Mammary epithelial cell (primary cell): ENCODE measurements at regions of chr15 and their contacts with region 1.

Region 1: DNA sequence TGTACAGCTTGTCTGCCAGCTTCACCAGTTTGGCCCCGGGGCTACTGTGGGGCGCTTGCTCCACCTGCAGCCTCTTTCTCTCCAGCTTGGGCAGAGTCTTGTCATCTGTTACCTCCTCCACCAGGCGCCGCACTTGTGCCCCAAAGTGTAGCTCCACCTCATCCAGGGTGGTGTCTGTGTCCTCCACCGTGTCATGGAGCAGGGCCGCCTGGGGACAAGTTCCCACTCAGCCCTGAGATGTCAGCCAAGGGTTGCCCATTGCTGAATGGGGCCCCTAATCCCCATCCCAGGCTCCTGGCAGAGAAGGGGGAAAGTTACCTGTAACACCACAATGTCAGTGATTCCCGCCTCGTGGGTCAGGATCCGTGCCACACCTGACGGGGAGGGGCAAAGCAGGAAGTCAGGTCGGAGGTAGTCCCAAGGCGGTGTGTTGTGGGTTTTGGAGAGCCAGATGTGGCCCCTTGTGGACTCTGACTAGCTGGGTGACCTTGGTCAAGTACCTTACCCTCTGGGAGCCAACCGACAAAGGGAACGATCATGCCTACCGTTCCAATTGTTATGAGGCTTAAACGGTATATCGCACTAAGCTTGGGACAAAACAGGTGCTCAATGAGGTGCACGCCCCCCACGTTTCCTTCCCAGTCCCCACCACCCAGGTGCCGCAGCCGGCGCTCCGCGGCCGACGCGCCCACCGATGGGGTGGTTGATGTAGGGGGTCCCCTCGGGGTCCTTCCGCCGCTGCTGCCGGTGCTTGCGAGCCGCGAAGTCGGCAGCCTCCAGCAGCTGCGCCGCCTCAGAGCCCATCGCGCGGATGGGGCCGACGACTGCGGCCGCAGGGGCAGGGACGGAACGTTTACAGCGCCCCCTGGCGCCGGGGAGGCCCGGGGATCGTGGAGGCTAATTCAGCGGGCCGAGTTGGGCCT is at the start of gene HDDC3:
- DNase-seq: peak; percentile 85
- H3K4me3 ChIP-seq: peak within 1 kb of the TSS; percentile 63 to 74 (median 69)
- H3K27ac ChIP-seq: peak within 1 kb of the TSS; percentile 50
- H3K4me1 ChIP-seq: peaks cover 39% of the 10 kb centered on the region
- H3K27me3 ChIP-seq: no peaks in the 10 kb centered on the region
- CTCF ChIP-seq: peak; percentile 64 to 98
- total RNA-seq, gene HDDC3: 10.5 to 16.2 TPM

Region 2: GRCh38 chr15:90859234-90860131 is 72.5 kb before region 1 on chr15:
- CTCF ChIA-PET with region 1: no interaction called
- dilution Hi-C with region 1: loop called (anchors 5 kb)
- in situ Hi-C with region 1: no loop called
- intact Hi-C with region 1: no loop called
- DNase-seq: no peak
- H3K4me3 ChIP-seq: no peak overlapping the region
- H3K27ac ChIP-seq: no peak overlapping the region
- H3K4me1 ChIP-seq: peaks cover 13% of the 10 kb centered on the region
- H3K27me3 ChIP-seq: no peaks in the 10 kb centered on the region
- CTCF ChIP-seq: no peak

Region 3: DNA sequence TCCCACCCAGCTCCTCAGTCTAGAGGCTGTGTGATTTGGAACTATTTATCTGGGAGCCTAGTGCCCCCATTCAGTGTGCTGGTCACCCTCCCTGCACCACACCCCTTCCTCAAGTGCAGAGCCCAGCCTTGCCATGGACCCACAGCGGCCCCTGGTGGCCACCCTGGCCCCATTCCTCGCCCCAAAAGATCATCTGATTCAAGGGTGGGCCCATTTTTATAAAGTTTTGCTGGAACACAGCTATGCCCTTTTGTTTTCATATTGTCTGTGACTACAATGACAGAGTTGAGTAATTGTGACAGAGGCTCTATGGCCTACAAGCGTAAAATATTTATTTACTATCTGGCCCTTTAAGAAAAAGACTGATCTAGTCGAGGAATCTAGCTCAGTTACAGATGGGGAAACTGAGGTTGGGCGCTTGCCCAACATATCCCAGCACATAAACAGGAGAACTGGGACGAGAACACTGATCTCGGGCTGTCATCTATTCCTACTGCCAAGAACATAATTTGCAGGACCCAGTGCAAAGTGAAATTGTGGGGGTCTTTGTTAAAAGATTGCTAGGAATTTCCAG is 45.9 kb before region 1 on chr15:
- CTCF ChIA-PET with region 1: no interaction called
- dilution Hi-C with region 1: no loop called
- in situ Hi-C with region 1: no loop called
- intact Hi-C with region 1: no loop called
- DNase-seq: no peak
- H3K4me3 ChIP-seq: no peak overlapping the region
- H3K27ac ChIP-seq: no peak overlapping the region
- H3K4me1 ChIP-seq: no peaks in the 10 kb centered on the region
- H3K27me3 ChIP-seq: no peaks in the 10 kb centered on the region
- CTCF ChIP-seq: peak; percentile 93 to 99

Region 4: DNA sequence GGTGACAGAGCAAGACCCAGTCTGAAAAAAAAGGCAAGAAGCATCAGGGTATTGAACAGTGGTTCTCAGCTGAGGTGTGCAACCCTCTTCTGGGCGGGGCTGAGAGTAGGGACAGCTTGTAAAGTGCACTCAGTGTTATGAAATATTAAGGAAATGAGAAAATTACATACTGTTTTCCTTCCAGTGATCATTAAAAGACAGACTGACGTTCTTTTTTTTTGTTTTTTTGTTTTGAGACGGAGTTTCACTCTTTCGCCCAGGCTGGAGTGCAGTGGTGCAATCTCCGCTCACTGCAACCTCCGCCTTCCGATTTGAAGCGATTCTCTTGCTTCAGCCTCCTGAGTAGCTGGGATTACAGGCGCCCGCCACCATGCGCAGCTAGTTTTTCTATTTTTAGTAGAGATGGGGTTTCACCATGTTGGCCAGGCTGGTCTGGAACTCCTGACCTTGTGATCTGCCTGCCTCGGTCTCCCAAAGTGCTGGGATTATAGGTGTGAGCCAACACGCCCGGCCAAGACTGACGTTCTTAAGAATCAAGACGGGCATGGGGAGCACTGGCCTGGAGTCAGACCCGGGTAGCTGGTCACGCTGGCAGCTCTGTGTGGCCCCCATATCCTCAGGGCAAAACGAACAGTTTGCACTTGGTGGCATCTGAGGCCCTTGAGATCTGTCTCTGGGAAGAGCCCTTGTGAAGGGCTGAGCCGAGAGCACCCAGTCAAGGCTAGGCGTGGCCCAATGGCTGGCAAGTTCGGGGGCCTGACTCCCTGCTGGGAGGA is 17.5 kb before region 1 on chr15:
- CTCF ChIA-PET with region 1: no interaction called
- dilution Hi-C with region 1: no loop called
- in situ Hi-C with region 1: no loop called
- intact Hi-C with region 1: no loop called
- DNase-seq: no peak
- H3K4me3 ChIP-seq: no peak overlapping the region
- H3K27ac ChIP-seq: no peak overlapping the region
- H3K4me1 ChIP-seq: no peaks in the 10 kb centered on the region
- H3K27me3 ChIP-seq: no peaks in the 10 kb centered on the region
- CTCF ChIP-seq: no peak

Region 5: GRCh38 chr15:90956594-90957030 is 24.6 kb after region 1 on chr15:
- CTCF ChIA-PET with region 1: interaction called, 21 read pairs
- dilution Hi-C with region 1: no loop called
- in situ Hi-C with region 1: no loop called
- intact Hi-C with region 1: no loop called
- DNase-seq: peak; percentile 41
- H3K4me3 ChIP-seq: peak overlapping the region; percentile 45 to 60 (median 46)
- H3K27ac ChIP-seq: no peak overlapping the region
- H3K4me1 ChIP-seq: peaks cover 19% of the 10 kb centered on the region
- H3K27me3 ChIP-seq: no peaks in the 10 kb centered on the region
- CTCF ChIP-seq: peak; percentile 73 to 95

Region 6: GRCh38 chr15:91022075-91022835 is 90.3 kb after region 1 on chr15 and contains the start of gene VPS33B:
- CTCF ChIA-PET with region 1: no interaction called
- dilution Hi-C with region 1: no loop called
- in situ Hi-C with region 1: no loop called
- intact Hi-C with region 1: no loop called
- DNase-seq: peak; percentile 83
- H3K4me3 ChIP-seq: peak within 1 kb of the TSS; percentile 52 to 77 (median 75)
- H3K27ac ChIP-seq: peak within 1 kb of the TSS; percentile 19
- H3K4me1 ChIP-seq: peaks cover 10% of the 10 kb centered on the region
- H3K27me3 ChIP-seq: no peaks in the 10 kb centered on the region
- CTCF ChIP-seq: no peak
- total RNA-seq, gene VPS33B: 8.7 to 19.9 TPM

Region 7: DNA sequence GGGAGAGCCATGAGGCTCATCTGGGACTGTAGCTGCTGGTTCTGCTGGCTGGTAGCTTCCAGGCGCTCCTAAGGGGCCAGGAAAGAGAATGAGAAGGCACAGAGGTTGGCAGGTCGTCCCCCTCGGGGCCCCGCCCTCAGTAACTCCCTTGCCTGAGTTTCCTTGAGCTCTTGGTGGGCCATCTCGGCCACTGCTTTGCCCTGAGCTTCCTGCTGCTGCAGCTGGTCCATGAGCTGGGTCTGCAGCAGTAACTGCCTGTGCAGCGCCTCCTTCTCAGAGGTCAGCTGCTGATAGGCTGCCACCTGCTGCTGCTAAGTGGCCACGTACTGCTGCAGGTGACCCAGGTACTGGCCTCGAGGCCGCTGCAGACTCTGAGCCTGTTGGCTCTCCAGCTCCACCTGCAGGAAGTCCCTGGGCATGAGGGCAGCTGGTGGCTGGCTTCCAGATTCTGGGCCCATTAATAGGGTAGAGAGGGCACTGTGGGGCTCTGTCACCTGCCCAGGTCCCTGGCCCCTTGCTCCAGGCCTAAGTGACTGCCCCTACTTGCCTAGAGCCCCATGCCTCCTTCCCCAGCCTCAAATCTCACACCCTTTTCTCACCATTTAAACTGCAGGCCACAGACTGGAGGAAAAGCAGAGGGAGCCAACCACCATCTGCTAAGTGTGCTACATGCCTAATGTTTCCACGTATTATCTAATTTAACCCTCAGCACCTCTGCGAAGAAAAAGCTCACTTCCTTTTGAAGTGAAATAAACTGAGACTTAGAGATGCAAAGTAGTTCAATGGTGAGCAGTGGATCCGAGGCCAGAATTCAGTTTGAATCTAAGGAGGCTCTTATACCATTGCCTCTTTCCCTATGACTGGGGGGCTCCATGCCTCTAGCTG is 101.2 kb after region 1 on chr15:
- CTCF ChIA-PET with region 1: interaction called, 4 read pairs
- dilution Hi-C with region 1: no loop called
- in situ Hi-C with region 1: no loop called
- intact Hi-C with region 1: loop called (anchors 1 kb)
- DNase-seq: peak; percentile 63
- H3K4me3 ChIP-seq: no peak overlapping the region
- H3K27ac ChIP-seq: no peak overlapping the region
- H3K4me1 ChIP-seq: no peaks in the 10 kb centered on the region
- H3K27me3 ChIP-seq: peaks cover 5% of the 10 kb centered on the region
- CTCF ChIP-seq: peak; percentile 59 to 80